SK-N-SH (cell line): ENCODE measurements at regions of chr11 and their contacts with region 1.

Region 1: DNA sequence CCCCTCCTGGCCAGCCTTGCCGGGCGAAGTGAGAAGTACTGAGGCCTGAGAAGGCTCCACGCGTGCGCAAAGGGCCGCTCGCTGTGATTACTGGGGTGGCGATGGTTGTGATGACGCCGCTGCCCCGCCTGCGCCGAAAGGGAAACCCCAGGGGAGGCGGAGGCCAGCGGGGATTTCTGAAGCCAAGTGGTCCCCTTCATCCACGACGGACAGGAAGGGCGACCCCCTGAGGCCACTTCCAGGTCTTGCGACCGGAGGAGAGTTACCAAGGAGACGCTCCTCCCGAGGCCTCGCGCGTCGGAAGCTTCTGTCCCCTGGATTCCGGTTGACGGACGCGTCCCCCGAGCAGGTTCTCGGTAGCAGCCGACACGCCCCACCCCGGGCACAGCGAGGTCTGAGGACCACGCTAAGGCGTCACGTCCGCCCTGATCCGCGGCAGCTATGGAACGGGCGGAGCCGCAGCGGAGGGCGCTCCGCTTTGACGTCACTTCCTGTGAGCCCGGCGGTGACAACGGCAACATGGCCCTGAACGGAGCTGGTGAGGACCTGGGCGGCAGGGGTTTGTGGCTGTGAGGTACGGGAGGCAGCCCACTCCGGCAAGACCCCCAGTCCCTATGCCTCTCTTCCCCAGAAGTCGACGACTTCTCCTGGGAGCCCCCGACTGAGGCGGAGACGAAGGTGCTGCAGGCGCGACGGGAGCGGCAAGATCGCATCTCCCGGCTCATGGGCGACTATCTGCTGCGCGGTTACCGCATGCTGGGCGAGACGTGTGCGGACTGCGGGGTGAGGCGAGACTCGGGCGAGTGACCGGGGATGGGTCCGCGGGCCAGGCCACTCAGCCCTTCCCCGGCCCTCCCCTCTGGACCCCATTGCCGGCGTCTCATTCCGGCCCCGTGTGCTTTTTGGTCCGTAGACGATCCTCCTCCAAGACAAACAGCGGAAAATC is at the start of gene ZNRD2:
- DNase-seq: peak; percentile 95
- H3K4me3 ChIP-seq: peak within 1 kb of the TSS; percentile 76 to 99
- H3K27ac ChIP-seq: peak within 1 kb of the TSS; percentile 81 to 97
- H3K4me1 ChIP-seq: peaks cover 41 to 47% of the 10 kb centered on the region in 2 experiments; a peak in 3 of 4 replicates
- H3K27me3 ChIP-seq: no peaks in the 10 kb centered on the region
- CTCF ChIP-seq: peak; percentile 65
- EP300 ChIP-seq: no peak; a peak in 1 of 4 replicates
- RAD21 ChIP-seq: peak; percentile 62
- polyA plus RNA-seq, gene ZNRD2: 62.5 and 78.1 TPM in 2 replicates

Region 2: DNA sequence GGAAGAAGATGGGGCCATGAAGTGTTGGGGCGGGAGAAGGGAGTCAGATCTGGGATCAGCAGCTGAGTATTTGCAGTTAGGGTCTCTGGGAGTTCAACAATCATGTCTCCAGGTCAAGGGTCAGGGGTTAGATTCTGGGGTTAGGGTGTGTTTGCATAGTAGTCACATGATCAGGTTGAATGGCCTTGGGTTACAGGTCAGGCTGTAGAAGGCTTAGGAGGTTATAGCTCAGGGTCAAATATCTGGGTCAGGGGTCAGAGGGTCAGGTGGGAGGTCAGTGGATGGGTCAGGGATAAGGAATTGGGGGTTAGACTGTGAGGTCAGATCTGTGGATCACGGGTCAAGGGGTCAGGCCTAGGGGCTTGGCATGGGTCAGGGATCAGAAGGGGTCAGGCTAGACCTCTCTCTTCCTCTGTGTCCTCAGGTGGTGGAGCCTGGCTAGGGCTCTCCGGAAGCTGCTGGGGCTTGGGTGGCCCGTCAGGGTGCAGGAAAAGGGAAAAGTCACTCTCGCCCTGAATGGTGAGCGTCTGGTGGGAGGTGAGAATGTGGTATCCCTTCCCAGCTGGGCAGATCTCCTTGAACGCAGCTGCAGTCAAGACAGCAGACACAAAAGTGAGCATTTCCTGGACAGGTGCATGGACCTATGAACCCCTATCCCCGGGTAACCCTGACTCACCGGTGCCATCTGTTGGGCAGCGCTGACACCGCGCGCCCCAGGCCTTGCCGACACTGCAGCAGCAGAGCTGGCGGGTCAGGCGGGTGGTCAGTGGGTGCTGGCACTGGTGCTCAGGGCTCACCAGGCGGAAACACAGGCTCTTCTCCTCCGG is 18.5 kb before region 1 on chr11:
- CTCF ChIA-PET with region 1: interaction called, 295 read pairs
- POLR2A ChIA-PET with region 1: interaction called, 3 read pairs
- DNase-seq: peak; percentile 85
- H3K4me3 ChIP-seq: no peak overlapping the region
- H3K27ac ChIP-seq: no peak overlapping the region
- H3K4me1 ChIP-seq: peaks cover 16 to 27% of the 10 kb centered on the region in 2 experiments; a peak in 3 of 4 replicates
- H3K27me3 ChIP-seq: no peaks in the 10 kb centered on the region
- CTCF ChIP-seq: peak; percentile 62
- EP300 ChIP-seq: no peak
- RAD21 ChIP-seq: peak; percentile 43

Region 3: GRCh38 chr11:65558002-65558931 is 12.0 kb before region 1 on chr11 and contains the start of gene LTBP3:
- CTCF ChIA-PET with region 1: interaction called, 61 read pairs
- POLR2A ChIA-PET with region 1: interaction called, 12 read pairs
- DNase-seq: peak; percentile 90
- H3K4me3 ChIP-seq: peak within 1 kb of the TSS; percentile 65 to 85
- H3K27ac ChIP-seq: peak within 1 kb of the TSS; percentile 97
- H3K4me1 ChIP-seq: peaks cover 53 to 67% of the 10 kb centered on the region in 2 experiments
- H3K27me3 ChIP-seq: no peaks in the 10 kb centered on the region
- CTCF ChIP-seq: no peak
- EP300 ChIP-seq: peak in 1 of 2 experiments; percentile 50; a peak in 1 of 4 replicates
- RAD21 ChIP-seq: no peak
- polyA plus RNA-seq, gene LTBP3: 92.1 and 167 TPM in 2 replicates

Region 4: GRCh38 chr11:65588199-65589054 is 18.2 kb after region 1 on chr11:
- CTCF ChIA-PET with region 1: interaction called, 216 read pairs
- POLR2A ChIA-PET with region 1: interaction called, 4 read pairs
- DNase-seq: peak; percentile 88
- H3K4me3 ChIP-seq: no peak overlapping the region
- H3K27ac ChIP-seq: no peak overlapping the region
- H3K4me1 ChIP-seq: peaks cover 0 to 13% of the 10 kb centered on the region in 2 experiments; a peak in 1 of 4 replicates
- H3K27me3 ChIP-seq: no peaks in the 10 kb centered on the region
- CTCF ChIP-seq: peak; percentile 58
- EP300 ChIP-seq: no peak
- RAD21 ChIP-seq: peak; percentile 60

Region 5: DNA sequence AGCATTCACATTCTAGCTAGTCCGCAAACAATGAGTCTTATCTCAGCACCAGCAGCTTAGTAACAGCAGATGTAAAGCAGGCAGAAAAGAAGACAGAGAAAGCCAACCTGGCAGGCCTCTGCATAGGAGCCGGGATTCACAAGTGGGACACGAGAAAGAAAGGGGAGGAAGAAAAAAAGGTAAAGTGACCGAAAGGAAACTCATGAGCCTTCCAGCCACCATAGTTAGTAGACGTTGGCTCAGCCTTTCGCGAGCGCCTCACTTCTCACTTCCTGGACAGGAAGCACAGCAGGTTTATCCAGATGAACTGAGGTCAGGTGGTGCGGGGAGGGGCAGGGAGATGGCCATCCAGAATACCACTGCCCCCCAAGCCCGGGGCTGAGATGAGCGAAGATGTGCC is 122.1 kb after region 1 on chr11:
- CTCF ChIA-PET with region 1: no interaction called
- POLR2A ChIA-PET with region 1: no interaction called
- DNase-seq: no peak
- H3K4me3 ChIP-seq: no peak overlapping the region
- H3K27ac ChIP-seq: no peak overlapping the region
- H3K4me1 ChIP-seq: no peaks in the 10 kb centered on the region
- H3K27me3 ChIP-seq: no peaks in the 10 kb centered on the region
- CTCF ChIP-seq: no peak
- EP300 ChIP-seq: no peak
- RAD21 ChIP-seq: no peak